ENCODE measurements at regions of chr9 and their contacts with region 1.

Region 1: GRCh38 chr9:123302348-123303214 is 34.2 kb upstream of the STRBP start:
- DNase-seq: no peak
- ATAC-seq: no peak
- H3K4me3 ChIP-seq: no peak overlapping the region
- H3K27ac ChIP-seq: no peak overlapping the region
- H3K4me1 ChIP-seq: no peaks in the 10 kb centered on the region
- H3K27me3 ChIP-seq: no peaks in the 10 kb centered on the region
- CTCF ChIP-seq: no peak

Region 2: GRCh38 chr9:123049589-123050222 is 252.9 kb before region 1 on chr9:
- CTCF ChIA-PET with region 1: no interaction called
- POLR2A ChIA-PET with region 1: no interaction called
- in situ Hi-C with region 1: no loop called
- intact Hi-C with region 1: no loop called
- DNase-seq: no peak
- ATAC-seq: no peak
- H3K4me3 ChIP-seq: no peak overlapping the region
- H3K27ac ChIP-seq: no peak overlapping the region
- H3K4me1 ChIP-seq: no peaks in the 10 kb centered on the region; the same call in 1 of the 2 replicates
- H3K27me3 ChIP-seq: no peaks in the 10 kb centered on the region
- CTCF ChIP-seq: no peak

Region 3: GRCh38 chr9:123268240-123268949 is 34.2 kb before region 1 on chr9 and contains the start of gene STRBP:
- CTCF ChIA-PET with region 1: interaction called, 10 read pairs
- POLR2A ChIA-PET with region 1: no interaction called
- in situ Hi-C with region 1: no loop called
- intact Hi-C with region 1: no loop called
- DNase-seq: peak; percentile 41
- ATAC-seq: peak; percentile 98
- H3K4me3 ChIP-seq: peak within 1 kb of the TSS; percentile 63 to 70
- H3K27ac ChIP-seq: peak within 1 kb of the TSS; percentile 63
- H3K4me1 ChIP-seq: 0 out of 2 replicates have a peak, but pooled peaks cover 3% of the 10 kb centered on the region
- H3K27me3 ChIP-seq: no peaks in the 10 kb centered on the region
- CTCF ChIP-seq: peak; percentile 27; the same call in 1 of the 2 replicates
- total RNA-seq, gene STRBP: 40.3 TPM

Measured in Panc1 (cell line).